ENCODE measurements at regions of chr19 and their contacts with region 1.

Region 1: GRCh38 chr19:38929929-38930775 is at the start of gene SARS2:
- DNase-seq: peak; percentile 98
- H3K4me3 ChIP-seq: peak within 1 kb of the TSS; percentile 80 to 81
- H3K27ac ChIP-seq: peak within 1 kb of the TSS; percentile 87 to 92
- H3K4me1 ChIP-seq: peaks cover 0 to 11% of the 10 kb centered on the region in 2 experiments; a peak in 1 of 4 replicates
- H3K27me3 ChIP-seq: no peaks in the 10 kb centered on the region
- CTCF ChIP-seq: peak; percentile 99
- EP300 ChIP-seq: no peak
- RAD21 ChIP-seq: peak; percentile 77
- polyA plus RNA-seq, gene SARS2: 36.5 and 39.8 TPM in 2 replicates

Region 2: GRCh38 chr19:38402967-38403861 is 526.9 kb before region 1 on chr19 and contains the start of gene FAM98C:
- CTCF ChIA-PET with region 1: interaction called, 24 read pairs
- POLR2A ChIA-PET with region 1: no interaction called
- DNase-seq: peak; percentile 100
- H3K4me3 ChIP-seq: peak within 1 kb of the TSS; percentile 67 to 93
- H3K27ac ChIP-seq: peak within 1 kb of the TSS; percentile 47 to 65; a peak in 3 of 4 replicates
- H3K4me1 ChIP-seq: no peaks in the 10 kb centered on the region; a peak in 1 of 4 replicates
- H3K27me3 ChIP-seq: no peaks in the 10 kb centered on the region
- CTCF ChIP-seq: peak; percentile 82
- EP300 ChIP-seq: peak in 1 of 2 experiments; percentile 30; a peak in 1 of 4 replicates
- RAD21 ChIP-seq: peak; percentile 84
- polyA plus RNA-seq, gene FAM98C: 24.9 and 26.7 TPM in 2 replicates

Region 3: DNA sequence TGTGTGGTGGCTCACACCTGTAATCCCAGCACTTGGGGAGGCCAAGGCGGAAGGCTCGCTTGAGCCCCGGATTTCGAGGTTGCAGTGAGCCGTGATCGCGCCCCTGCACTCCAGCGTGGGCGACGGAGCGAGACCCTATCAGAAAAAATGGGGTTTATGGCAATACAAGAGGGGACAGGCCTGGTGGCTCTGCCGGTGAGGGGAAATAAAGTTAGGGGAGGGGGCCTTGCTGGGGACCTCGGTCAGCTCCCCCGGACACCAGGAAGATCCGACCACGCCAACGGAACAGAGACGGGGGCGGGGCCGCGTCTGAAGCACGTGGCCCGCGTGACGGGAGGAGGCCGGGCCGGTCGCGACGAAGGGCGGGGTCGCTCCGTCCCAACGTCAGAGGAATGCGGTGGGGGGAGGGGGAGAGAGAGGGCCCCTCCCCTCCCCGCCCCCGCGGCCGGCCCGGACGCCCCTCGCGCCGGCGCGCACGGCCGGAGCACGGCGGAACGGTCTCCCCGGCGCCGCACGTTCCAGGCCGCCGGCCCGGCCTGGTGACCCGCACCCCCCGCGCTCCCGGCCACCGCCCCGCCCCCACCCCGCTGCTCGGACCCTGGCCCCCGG is 78.4 kb before region 1 on chr19:
- CTCF ChIA-PET with region 1: interaction called, 10 read pairs
- POLR2A ChIA-PET with region 1: interaction called, 3 read pairs
- DNase-seq: peak; percentile 95
- H3K4me3 ChIP-seq: peak overlapping the region; percentile 64 to 87
- H3K27ac ChIP-seq: peak overlapping the region; percentile 95 to 97
- H3K4me1 ChIP-seq: peaks cover 18 to 30% of the 10 kb centered on the region in 2 experiments; a peak in 1 of 4 replicates
- H3K27me3 ChIP-seq: no peaks in the 10 kb centered on the region
- CTCF ChIP-seq: no peak
- EP300 ChIP-seq: peak in 1 of 2 experiments; percentile 33; a peak in 1 of 4 replicates
- RAD21 ChIP-seq: no peak

Region 4: DNA sequence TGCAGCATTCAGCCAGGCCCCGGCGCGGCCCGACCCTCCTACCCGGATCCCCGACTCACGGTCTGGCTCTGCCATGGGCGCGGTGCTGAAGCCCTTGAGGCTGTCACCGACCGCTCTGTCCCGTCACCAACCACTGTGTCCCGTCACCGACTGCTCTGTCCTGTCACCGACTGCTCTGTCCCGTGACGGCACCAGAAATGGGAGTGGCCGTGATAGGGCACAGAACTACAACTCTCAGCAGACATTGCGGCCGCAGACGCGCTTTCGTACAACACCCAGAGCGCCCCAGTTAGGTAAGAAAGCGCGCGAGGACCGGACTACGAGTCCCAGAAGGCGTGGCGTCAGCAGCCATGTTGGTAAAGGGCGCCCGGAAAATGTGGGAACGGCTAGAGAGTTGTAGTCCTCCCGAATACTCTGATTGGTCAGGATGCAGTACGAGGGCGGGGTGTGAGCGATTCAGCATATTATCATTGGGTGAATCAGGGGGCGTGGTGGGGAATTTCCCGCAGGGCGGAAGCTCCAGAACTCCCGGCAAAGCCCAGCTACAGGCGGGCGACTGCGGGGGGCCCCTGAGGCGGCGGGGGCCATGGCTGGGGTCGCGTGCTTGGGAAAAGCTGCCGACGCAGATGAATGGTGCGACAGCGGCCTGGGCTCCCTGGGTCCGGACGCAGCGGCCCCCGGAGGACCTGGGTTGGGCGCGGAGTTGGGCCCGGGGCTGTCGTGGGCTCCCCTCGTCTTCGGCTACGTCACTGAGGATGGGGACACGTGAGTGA is 30.5 kb before region 1 on chr19 and contains the starts of genes NFKBIB and SIRT2:
- CTCF ChIA-PET with region 1: interaction called, 19 read pairs
- POLR2A ChIA-PET with region 1: interaction called, 3 read pairs
- DNase-seq: peak; percentile 98
- H3K4me3 ChIP-seq: peak within 1 kb of the TSS; percentile 66 to 92
- H3K27ac ChIP-seq: peak within 1 kb of the TSS; percentile 51 to 77
- H3K4me1 ChIP-seq: peaks cover 0 to 9% of the 10 kb centered on the region in 2 experiments; a peak in 2 of 4 replicates
- H3K27me3 ChIP-seq: no peaks in the 10 kb centered on the region
- CTCF ChIP-seq: no peak
- EP300 ChIP-seq: no peak
- RAD21 ChIP-seq: peak; percentile 22; the same call in 1 of the 2 replicates
- polyA plus RNA-seq, gene NFKBIB: 29.6 and 31.8 TPM in 2 replicates
- polyA plus RNA-seq, gene SIRT2: 37.9 and 39.3 TPM in 2 replicates

Region 5: DNA sequence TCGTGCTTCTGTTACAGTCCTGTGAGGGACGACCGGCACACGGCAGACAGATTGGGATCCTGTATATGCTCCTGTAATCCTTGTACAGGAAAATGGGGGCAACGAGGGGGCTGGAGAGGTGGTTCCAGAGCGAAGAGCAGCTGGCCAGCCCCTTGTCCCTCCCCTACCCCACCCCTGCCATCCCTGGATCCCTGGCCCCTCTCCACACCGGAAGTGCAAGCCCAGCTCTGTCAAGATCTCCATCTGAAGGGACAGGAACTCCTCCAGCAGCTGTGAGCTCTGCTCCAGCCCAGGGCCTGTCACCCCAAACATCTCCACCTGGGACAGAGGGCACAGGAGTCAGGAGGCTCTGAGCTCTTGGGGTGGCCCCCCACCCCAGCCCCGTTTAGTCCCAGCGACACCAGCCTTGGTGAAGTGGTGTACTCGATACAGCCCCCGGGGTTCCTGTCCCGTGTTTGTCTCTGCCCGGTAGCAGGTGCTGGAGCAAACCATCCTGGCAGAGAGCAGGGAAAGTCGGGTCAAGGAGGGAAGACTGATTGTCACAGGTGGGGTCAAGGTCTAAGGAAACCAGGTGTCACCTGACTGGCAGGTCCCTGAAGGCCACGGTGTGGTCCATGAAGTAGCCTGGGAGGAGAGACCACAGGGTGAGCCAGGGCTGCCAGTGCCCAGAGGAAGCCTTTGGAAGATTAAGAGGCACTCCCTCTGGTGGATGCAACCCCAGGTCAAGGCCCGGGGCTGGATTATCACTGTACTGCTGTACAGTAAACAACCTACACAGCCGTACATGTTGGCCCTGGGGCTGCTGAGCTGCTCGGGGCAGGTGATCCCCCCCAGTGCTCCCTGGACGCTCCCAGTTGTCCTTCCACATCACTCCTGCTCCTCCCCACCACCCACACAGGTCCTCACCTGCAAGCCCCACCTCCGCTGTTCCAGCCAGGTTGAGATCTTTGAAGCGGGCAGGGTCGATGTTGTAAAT is 12.3 kb before region 1 on chr19:
- CTCF ChIA-PET with region 1: interaction called, 23 read pairs
- POLR2A ChIA-PET with region 1: interaction called, 4 read pairs
- DNase-seq: peak; percentile 83
- H3K4me3 ChIP-seq: no peak overlapping the region
- H3K27ac ChIP-seq: peak overlapping the region in 1 of 2 experiments; percentile 14; a peak in 1 of 4 replicates
- H3K4me1 ChIP-seq: peaks cover 0 to 10% of the 10 kb centered on the region in 2 experiments; a peak in 1 of 4 replicates
- H3K27me3 ChIP-seq: no peaks in the 10 kb centered on the region
- CTCF ChIP-seq: peak; percentile 24; the same call in 1 of the 2 replicates
- EP300 ChIP-seq: no peak
- RAD21 ChIP-seq: peak; percentile 26

Region 6: GRCh38 chr19:39170395-39171231 is 240.5 kb after region 1 on chr19:
- CTCF ChIA-PET with region 1: no interaction called
- POLR2A ChIA-PET with region 1: no interaction called
- DNase-seq: no peak
- H3K4me3 ChIP-seq: no peak overlapping the region
- H3K27ac ChIP-seq: peak overlapping the region in 1 of 2 experiments; percentile 91; a peak in 2 of 4 replicates
- H3K4me1 ChIP-seq: peaks cover 0 to 57% of the 10 kb centered on the region in 2 experiments; a peak in 1 of 4 replicates
- H3K27me3 ChIP-seq: no peaks in the 10 kb centered on the region
- CTCF ChIP-seq: no peak
- EP300 ChIP-seq: no peak
- RAD21 ChIP-seq: no peak

Measured in SK-N-SH (cell line).